ENCODE measurements at regions of chr3 and their contacts with region 1.

Region 1: DNA sequence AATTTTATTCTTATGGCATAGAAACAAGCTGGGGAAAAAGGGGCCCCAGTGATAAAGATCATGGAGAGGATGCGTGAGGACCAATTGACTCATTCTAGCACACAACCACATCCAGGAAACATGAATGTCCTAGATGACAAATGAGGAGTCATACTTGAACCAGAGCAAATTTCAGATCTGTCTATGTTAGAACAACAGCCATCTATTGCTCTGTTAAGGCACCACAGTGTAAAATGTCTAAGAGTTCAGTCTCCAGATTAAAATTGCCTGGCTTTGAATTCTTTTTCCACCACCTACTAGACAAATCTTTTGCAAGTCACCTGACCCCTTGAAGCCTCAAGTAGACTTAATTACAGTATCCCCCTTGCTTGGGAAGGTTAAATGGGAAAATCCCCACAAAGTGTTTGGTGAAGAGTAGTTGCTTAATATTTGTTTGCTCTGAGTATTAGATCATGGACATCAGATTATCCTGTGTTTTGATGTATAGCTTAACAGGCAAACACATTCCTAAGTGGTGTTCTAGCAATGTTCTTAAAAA is 258.7 kb upstream of the TGFBR2 start:
- DNase-seq: peak; percentile 40
- H3K4me3 Mint-ChIP-seq: peak overlapping the region; percentile 24
- H3K27ac Mint-ChIP-seq: peak overlapping the region; percentile 57
- H3K4me1 Mint-ChIP-seq: peaks cover 73% of the 10 kb centered on the region
- H3K27me3 Mint-ChIP-seq: peaks cover 7% of the 10 kb centered on the region

Region 2: DNA sequence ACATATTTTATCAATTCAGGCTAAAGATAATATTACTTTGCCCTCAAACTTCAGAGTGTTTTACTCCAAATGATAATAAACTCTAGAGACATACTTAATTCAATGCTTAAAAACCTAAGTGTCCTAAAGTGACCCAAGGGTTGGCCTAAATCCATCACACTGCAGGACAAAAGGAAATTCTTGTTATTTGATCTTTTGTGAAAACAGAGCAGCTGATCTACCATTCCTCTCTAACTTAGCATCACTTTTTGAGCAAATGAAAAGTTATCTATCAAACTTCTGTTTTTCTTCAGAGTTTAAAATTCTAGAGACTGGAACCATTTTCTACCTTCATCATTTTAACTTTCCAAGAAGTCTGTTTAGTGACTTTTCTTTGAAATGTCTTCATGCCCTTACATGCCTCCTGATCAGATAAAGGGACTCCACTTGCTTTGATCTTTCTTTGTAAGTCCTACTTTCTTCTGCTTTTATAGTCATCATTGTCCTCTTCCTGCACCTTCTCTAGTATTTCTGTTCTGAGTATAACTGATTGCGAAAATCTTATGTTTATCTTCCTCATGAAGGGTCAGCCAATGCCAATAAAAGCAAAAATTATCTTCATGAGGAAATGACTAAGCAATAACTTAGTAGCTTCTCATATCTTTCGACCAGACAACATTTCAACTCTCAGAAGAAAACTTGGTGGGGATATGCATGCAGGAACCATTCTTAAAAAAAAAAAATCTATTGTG is 120.0 kb before region 1 on chr3:
- intact Hi-C with region 1: loop called (anchors 5 kb)
- DNase-seq: no peak
- H3K4me3 Mint-ChIP-seq: no peak overlapping the region
- H3K27ac Mint-ChIP-seq: peak overlapping the region; percentile 19
- H3K4me1 Mint-ChIP-seq: peaks cover 24% of the 10 kb centered on the region
- H3K27me3 Mint-ChIP-seq: no peaks in the 10 kb centered on the region

Region 3: GRCh38 chr3:30606301-30607031 is 258.7 kb after region 1 on chr3 and contains the start of gene TGFBR2:
- intact Hi-C with region 1: loop called (anchors 5 kb)
- DNase-seq: peak; percentile 75
- H3K4me3 Mint-ChIP-seq: peak within 1 kb of the TSS; percentile 94
- H3K27ac Mint-ChIP-seq: peak within 1 kb of the TSS; percentile 97
- H3K4me1 Mint-ChIP-seq: peaks cover 63% of the 10 kb centered on the region
- H3K27me3 Mint-ChIP-seq: no peaks in the 10 kb centered on the region
- total RNA-seq, gene TGFBR2: 19.5 and 19.8 TPM in 2 replicates

Region 4: DNA sequence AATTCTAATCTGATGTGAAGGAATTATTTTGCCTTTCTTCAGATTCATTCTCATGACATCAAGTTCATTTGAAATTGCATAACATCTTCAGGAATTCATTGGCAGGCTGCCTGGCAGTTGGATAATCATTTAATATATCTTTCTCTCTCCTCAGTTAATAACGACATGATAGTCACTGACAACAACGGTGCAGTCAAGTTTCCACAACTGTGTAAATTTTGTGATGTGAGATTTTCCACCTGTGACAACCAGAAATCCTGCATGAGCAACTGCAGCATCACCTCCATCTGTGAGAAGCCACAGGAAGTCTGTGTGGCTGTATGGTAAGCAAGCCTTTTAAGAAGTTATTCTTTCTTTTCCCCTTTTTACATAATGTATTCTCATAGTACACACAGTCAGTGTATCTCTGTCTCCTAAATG is 296.9 kb after region 1 on chr3:
- intact Hi-C with region 1: loop called (anchors 5 kb)
- DNase-seq: no peak
- H3K4me3 Mint-ChIP-seq: peak overlapping the region; percentile 64
- H3K27ac Mint-ChIP-seq: peak overlapping the region; percentile 95
- H3K4me1 Mint-ChIP-seq: peaks cover 88% of the 10 kb centered on the region
- H3K27me3 Mint-ChIP-seq: no peaks in the 10 kb centered on the region

Region 5: DNA sequence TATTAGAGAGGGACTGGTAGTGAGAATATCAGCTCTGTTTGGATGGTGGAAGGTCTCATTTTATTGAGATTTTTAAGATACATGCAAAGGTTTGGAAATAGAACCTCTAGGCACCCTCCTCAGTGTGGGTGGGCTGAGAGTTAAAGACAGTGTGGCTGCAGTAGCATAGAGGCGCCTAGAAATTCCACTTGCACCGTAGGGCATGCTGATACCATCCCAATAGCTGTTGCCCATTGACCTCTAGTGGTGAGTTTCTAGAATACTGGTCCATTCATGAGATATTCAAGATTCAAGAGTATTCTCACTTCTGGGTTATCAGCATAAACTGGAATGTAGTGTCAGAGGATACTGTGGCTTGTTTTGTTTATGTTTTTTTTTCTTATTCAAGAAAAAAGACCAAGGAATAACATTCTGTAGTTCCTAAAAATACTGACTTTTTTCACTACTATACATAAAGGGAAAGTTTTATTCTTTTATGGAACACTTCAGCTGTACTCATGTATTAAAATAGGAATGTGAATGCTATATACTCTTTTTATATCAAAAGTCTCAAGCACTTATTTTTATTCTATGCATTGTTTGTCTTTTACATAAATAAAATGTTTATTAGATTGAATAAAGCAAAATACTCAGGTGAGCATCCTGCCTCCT is 345.8 kb after region 1 on chr3:
- intact Hi-C with region 1: loop called (anchors 5 kb)
- DNase-seq: no peak
- H3K4me3 Mint-ChIP-seq: no peak overlapping the region
- H3K27ac Mint-ChIP-seq: no peak overlapping the region
- H3K4me1 Mint-ChIP-seq: peaks cover 31% of the 10 kb centered on the region
- H3K27me3 Mint-ChIP-seq: no peaks in the 10 kb centered on the region

Region 6: GRCh38 chr3:31077021-31077601 is 729.4 kb after region 1 on chr3:
- intact Hi-C with region 1: loop called (anchors 2 kb)
- DNase-seq: peak; percentile 18
- H3K4me3 Mint-ChIP-seq: no peak overlapping the region
- H3K27ac Mint-ChIP-seq: peak overlapping the region; percentile 52
- H3K4me1 Mint-ChIP-seq: peaks cover 34% of the 10 kb centered on the region
- H3K27me3 Mint-ChIP-seq: peaks cover 7% of the 10 kb centered on the region